Heart right ventricle (tissue), 16 donors: ENCODE measurements at regions of chr10 and their contacts with region 1.

Region 1: GRCh38 chr10:31847515-31847914 is 81.1 kb downstream of the ARHGAP12 start:
- DNase-seq: no peak
- ATAC-seq: no peak
- H3K4me3 ChIP-seq: no peak overlapping the region
- H3K27ac ChIP-seq: no peak overlapping the region
- H3K4me1 ChIP-seq: no peaks in the 10 kb centered on the region
- H3K27me3 ChIP-seq: no peaks in the 10 kb centered on the region
- CTCF ChIP-seq: no peak

Region 2: DNA sequence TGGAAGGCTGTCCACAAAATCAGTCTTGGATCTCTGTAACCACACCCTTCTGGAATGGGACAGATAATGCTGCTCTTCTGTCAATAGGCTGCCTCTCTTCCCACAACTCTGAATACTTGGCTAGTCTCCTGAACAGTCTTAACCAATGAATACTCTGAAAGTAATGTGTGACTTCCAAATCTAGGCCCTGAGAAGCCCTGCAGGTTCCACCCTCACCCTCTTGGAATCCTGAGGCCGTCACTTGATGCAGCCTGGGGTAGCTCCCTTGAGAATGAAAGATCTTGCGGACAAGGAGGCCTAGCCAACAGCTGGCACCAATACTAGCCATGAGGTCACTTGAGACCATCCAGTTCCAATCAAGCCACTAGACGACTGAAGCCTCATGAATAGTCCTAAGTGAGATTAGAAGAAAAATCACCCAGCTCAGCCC is 28.1 kb before region 1 on chr10:
- intact Hi-C with region 1: no loop called
- DNase-seq: peak in 1 of 2 donors; percentile 16
- ATAC-seq: peak in 7 of 8 donors; percentile 14 to 64 (median 34)
- H3K4me3 ChIP-seq: no peak overlapping the region
- H3K27ac ChIP-seq: peak overlapping the region in 3 of 10 donors; percentile 5 to 59 (median 15)
- H3K4me1 ChIP-seq: peaks cover 0 to 37% (median 23%) of the 10 kb centered on the region in 9 donors
- H3K27me3 ChIP-seq: no peaks in the 10 kb centered on the region
- CTCF ChIP-seq: no peak

Region 3: GRCh38 chr10:32207544-32207943 is 360.0 kb after region 1 on chr10:
- intact Hi-C with region 1: loop called in 2 of 10 experiments (anchors 10 kb)
- DNase-seq: peak; percentile 24 to 34
- ATAC-seq: peak in 3 of 8 donors; percentile 55 to 61 (median 58)
- H3K4me3 ChIP-seq: no peak overlapping the region
- H3K27ac ChIP-seq: no peak overlapping the region
- H3K4me1 ChIP-seq: no peaks in the 10 kb centered on the region
- H3K27me3 ChIP-seq: no peaks in the 10 kb centered on the region
- CTCF ChIP-seq: peak; percentile 36 to 72 (median 65)